T-cell (primary cell): ENCODE measurements at regions of chr12 and their contacts with region 1.

Region 1: DNA sequence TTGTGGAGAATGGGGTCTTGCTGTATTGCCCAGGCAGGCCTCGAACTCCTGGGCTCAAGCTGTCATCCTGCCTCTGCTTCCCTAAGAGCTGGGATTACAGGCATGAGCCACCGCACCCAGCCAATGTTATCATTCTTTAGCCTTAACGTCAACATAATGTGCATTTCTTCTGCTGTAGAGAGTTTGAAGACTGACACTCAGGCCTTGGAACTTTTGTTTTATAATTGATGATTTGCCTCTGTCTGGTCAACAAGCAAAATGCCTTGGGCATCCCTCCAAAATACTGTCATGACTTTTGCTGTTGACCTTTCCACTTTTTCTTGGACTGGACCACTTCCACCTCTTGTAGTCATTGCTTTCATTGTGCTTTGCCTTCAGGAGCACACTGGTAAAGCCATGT is 29.0 kb downstream of the FAM234B start:
- DNase-seq: no peak
- ATAC-seq: no peak
- H3K4me3 ChIP-seq: no peak overlapping the region
- H3K4me3 Mint-ChIP-seq: no peak overlapping the region
- H3K27ac ChIP-seq: no peak overlapping the region
- H3K27ac Mint-ChIP-seq: no peak overlapping the region
- H3K4me1 ChIP-seq: no peaks in the 10 kb centered on the region
- H3K4me1 Mint-ChIP-seq: no peaks in the 10 kb centered on the region
- H3K27me3 ChIP-seq: no peaks in the 10 kb centered on the region
- H3K27me3 Mint-ChIP-seq: no peaks in the 10 kb centered on the region

Region 2: GRCh38 chr12:13085968-13086686 is 13.0 kb after region 1 on chr12:
- CTCF ChIA-PET with region 1: no interaction called
- POLR2A ChIA-PET with region 1: no interaction called
- DNase-seq: no peak
- ATAC-seq: no peak
- H3K4me3 ChIP-seq: no peak overlapping the region
- H3K4me3 Mint-ChIP-seq: no peak overlapping the region
- H3K27ac ChIP-seq: no peak overlapping the region
- H3K27ac Mint-ChIP-seq: no peak overlapping the region
- H3K4me1 ChIP-seq: no peaks in the 10 kb centered on the region
- H3K4me1 Mint-ChIP-seq: no peaks in the 10 kb centered on the region
- H3K27me3 ChIP-seq: no peaks in the 10 kb centered on the region
- H3K27me3 Mint-ChIP-seq: no peaks in the 10 kb centered on the region

Region 3: GRCh38 chr12:13230500-13230899 is 157.3 kb after region 1 on chr12:
- CTCF ChIA-PET with region 1: no interaction called
- POLR2A ChIA-PET with region 1: interaction called in 1 of 2 experiments, 15 read pairs
- DNase-seq: no peak
- ATAC-seq: no peak
- H3K4me3 ChIP-seq: no peak overlapping the region
- H3K4me3 Mint-ChIP-seq: no peak overlapping the region
- H3K27ac ChIP-seq: no peak overlapping the region
- H3K27ac Mint-ChIP-seq: no peak overlapping the region
- H3K4me1 ChIP-seq: no peaks in the 10 kb centered on the region
- H3K4me1 Mint-ChIP-seq: no peaks in the 10 kb centered on the region
- H3K27me3 ChIP-seq: peaks cover 0 to 2% of the 10 kb centered on the region in 2 experiments
- H3K27me3 Mint-ChIP-seq: peaks cover 24% of the 10 kb centered on the region in 2 donors